ENCODE measurements at regions of chr7 and their contacts with region 1.

Region 1: GRCh38 chr7:49244543-49244942 is 320.2 kb downstream of the CDC14C start:
- DNase-seq: no peak
- H3K4me3 ChIP-seq: no peak overlapping the region
- H3K27ac ChIP-seq: peak overlapping the region; percentile 63
- H3K4me1 ChIP-seq: peaks cover 27% of the 10 kb centered on the region
- CTCF ChIP-seq: no peak

Region 2: DNA sequence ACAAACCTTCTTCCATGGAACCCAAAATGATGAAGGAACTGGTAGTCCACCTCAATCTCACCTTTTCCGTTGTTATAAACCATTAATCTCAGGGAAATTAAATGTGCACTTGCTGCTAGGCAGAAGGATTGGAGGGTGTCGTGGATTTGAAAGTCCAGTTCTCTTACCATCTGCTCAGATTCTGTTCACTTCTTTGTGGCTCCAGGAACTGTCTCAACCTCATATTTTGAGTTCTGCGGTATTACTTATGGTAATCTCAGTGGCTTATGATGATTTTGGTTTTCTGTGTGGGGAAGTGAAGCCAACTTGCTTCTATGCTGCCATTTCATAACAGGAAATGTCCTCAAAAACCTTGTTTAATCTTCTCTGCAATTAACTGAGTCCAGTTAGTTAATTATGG is 183.8 kb before region 1 on chr7:
- CTCF ChIA-PET with region 1: no interaction called
- POLR2A ChIA-PET with region 1: no interaction called
- intact Hi-C with region 1: no loop called
- DNase-seq: peak; percentile 4
- H3K4me3 ChIP-seq: no peak overlapping the region
- H3K27ac ChIP-seq: no peak overlapping the region
- H3K4me1 ChIP-seq: peaks cover 4% of the 10 kb centered on the region
- CTCF ChIP-seq: no peak

Region 3: DNA sequence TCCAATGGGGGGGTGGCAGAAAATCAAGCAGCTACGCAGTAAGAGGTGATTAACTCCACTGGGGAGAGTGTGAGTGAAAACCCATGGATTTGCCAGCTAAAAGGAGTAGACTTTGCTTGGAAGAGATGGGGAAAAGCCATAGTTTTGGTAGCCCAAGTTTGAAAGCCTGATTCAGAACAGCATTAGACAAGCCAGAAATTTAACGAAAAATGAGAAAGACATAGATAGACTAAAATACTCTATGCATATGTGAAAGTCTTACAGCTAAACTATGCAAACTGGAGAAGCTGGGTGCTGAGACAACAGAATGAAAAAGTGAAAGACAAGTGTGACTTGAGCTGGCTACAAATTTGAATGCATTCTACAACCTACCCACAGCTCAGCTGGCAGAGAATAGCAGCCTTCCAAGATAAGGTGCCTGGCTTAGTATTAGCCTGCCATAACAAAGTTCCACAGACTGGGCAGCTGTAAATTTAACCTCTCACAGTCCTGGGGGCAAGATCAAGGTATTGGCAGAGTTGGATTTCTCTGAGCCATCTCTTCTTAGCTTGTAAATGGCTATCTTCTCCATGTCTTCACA is 163.6 kb before region 1 on chr7:
- CTCF ChIA-PET with region 1: no interaction called
- POLR2A ChIA-PET with region 1: no interaction called
- intact Hi-C with region 1: loop called (anchors 5 kb)
- DNase-seq: no peak
- H3K4me3 ChIP-seq: no peak overlapping the region
- H3K27ac ChIP-seq: no peak overlapping the region
- H3K4me1 ChIP-seq: no peaks in the 10 kb centered on the region
- CTCF ChIP-seq: no peak

Region 4: DNA sequence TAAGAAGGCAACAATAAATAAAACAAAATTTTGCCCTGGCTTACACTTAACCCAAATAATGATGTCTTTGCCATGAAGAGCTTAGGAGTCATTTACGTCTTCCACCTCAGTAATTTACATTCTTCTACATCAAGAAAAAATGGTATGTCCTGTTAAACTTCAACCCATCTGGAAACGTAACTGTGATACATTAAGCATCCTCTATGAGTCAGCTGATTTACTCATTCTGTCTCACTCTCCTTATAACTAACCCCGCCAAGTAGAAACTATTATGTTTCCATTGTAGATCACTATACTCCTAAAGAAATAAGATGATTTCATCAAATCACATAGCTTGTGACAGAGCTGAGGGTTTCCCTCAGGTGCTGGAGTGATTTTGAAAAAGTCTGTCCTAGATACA is 10.5 kb after region 1 on chr7:
- CTCF ChIA-PET with region 1: no interaction called
- POLR2A ChIA-PET with region 1: interaction called, 12 read pairs
- intact Hi-C with region 1: no loop called
- DNase-seq: no peak
- H3K4me3 ChIP-seq: no peak overlapping the region
- H3K27ac ChIP-seq: no peak overlapping the region
- H3K4me1 ChIP-seq: no peaks in the 10 kb centered on the region
- CTCF ChIP-seq: no peak

Measured in OCI-LY7 (cell line).